HepG2 (cell line): ENCODE measurements at regions of chr15 and their contacts with region 1.

Region 1: DNA sequence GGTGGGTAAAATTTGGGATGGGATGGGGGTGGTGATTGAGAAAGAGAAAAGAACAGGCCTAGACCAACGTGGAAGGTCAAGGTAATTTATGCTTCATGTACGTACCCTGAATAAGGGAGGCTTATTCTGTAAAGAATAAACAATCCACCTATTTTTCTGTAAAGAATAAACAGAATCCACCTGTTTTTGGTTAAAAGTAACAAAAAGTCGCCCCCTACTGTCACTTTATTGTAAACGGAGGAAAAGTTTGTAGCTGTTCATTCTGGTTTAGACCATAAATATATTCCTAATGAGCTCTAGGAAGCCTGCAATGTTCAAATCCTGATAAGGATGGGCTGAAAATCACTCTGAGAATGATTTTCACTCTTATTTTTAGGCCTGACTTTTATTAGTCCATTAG is 23.5 kb upstream of the SQOR start:
- DNase-seq: peak; percentile 12
- ATAC-seq: no peak
- H3K4me3 ChIP-seq: no peak overlapping the region
- H3K27ac ChIP-seq: no peak overlapping the region
- H3K4me1 ChIP-seq: no peaks in the 10 kb centered on the region; the same call in 1 of the 2 replicates
- H3K27me3 ChIP-seq: no peaks in the 10 kb centered on the region
- CTCF ChIP-seq: peak; percentile 37
- EP300 ChIP-seq: no peak
- POLR2A ChIP-seq: no peak
- RAD21 ChIP-seq: no peak

Region 2: GRCh38 chr15:45346381-45346780 is 264.9 kb before region 1 on chr15:
- CTCF ChIA-PET with region 1: no interaction called
- POLR2A ChIA-PET with region 1: no interaction called
- in situ Hi-C with region 1: no loop called
- intact Hi-C with region 1: no loop called
- DNase-seq: peak; percentile 28
- ATAC-seq: peak; percentile 76
- H3K4me3 ChIP-seq: no peak overlapping the region
- H3K27ac ChIP-seq: peak overlapping the region; percentile 61
- H3K4me1 ChIP-seq: peaks cover 74% of the 10 kb centered on the region
- H3K27me3 ChIP-seq: no peaks in the 10 kb centered on the region
- CTCF ChIP-seq: no peak
- EP300 ChIP-seq: no peak
- POLR2A ChIP-seq: no peak
- RAD21 ChIP-seq: no peak

Region 3: DNA sequence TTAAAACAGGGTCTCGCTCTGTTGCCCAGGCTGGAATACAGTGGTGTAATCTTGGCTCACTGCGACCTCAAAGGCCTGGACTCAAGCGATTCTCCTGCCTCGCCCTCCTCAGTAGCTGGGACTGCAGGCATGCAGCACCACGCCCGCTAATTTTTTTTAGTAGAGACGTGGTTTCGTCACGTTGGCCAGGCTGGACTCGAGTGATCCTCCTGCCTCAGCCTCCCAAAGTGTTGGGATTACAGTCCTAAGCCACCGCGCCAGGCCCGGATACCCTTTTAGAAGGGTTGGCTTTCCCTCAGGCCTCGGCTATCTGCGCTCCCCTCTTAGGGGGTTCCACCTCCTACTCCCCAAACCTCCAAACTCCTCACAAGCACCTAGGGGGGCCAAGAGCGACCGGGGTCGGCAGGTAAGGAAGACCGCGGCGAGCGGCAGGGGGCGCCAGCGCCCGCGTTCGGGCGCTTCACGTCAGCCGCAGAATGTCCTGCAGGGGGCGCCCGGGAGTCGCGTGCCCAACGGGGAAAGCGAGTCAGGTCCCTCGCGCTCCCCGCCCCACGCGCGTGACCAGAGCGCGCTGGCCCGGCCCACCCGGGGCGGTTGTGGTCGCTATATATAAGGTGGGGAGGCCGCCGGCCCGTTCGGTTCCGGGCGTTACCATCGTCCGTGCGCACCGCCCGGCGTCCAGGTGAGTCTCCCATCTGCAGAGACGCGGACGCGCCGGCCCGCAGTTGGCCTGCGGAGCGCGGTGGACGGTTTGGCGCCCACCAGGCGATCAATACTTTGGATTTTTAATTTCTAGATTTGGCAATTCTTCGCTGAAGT is 181.1 kb before region 1 on chr15:
- CTCF ChIA-PET with region 1: interaction called, 15 read pairs
- POLR2A ChIA-PET with region 1: no interaction called
- in situ Hi-C with region 1: no loop called
- intact Hi-C with region 1: no loop called
- DNase-seq: peak; percentile 22
- ATAC-seq: peak; percentile 93
- H3K4me3 ChIP-seq: peak overlapping the region; percentile 43 to 67 (median 54); a peak in 4 of 6 replicates
- H3K27ac ChIP-seq: no peak overlapping the region
- H3K4me1 ChIP-seq: peaks cover 24% of the 10 kb centered on the region
- H3K27me3 ChIP-seq: no peaks in the 10 kb centered on the region
- CTCF ChIP-seq: peak; percentile 97
- EP300 ChIP-seq: no peak
- POLR2A ChIP-seq: no peak
- RAD21 ChIP-seq: peak; percentile 94

Region 4: DNA sequence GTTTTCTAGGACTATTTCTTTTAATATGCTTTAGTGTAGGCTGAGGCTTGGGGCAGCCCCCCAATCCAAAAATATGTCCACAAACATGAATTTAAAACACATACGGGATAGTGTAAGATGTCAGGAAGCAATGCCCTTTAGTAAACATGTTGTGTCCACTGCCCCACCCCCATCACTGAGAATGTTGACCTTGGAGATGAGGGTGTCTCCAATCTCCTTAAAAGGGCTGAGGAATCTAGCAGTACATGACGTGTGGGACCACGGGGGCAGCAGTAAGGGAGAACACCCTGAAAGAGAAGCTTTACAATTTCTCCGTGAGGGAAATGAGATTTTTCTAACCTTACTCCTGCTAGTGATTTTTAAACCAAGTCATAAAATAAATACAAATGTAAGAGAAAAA is 108.2 kb after region 1 on chr15:
- CTCF ChIA-PET with region 1: no interaction called
- POLR2A ChIA-PET with region 1: no interaction called
- in situ Hi-C with region 1: no loop called
- intact Hi-C with region 1: no loop called
- DNase-seq: no peak
- ATAC-seq: no peak
- H3K4me3 ChIP-seq: no peak overlapping the region
- H3K27ac ChIP-seq: no peak overlapping the region
- H3K4me1 ChIP-seq: peaks cover 7% of the 10 kb centered on the region
- H3K27me3 ChIP-seq: no peaks in the 10 kb centered on the region; a peak in 1 of 5 replicates
- CTCF ChIP-seq: no peak
- EP300 ChIP-seq: no peak
- POLR2A ChIP-seq: no peak
- RAD21 ChIP-seq: no peak

Region 5: DNA sequence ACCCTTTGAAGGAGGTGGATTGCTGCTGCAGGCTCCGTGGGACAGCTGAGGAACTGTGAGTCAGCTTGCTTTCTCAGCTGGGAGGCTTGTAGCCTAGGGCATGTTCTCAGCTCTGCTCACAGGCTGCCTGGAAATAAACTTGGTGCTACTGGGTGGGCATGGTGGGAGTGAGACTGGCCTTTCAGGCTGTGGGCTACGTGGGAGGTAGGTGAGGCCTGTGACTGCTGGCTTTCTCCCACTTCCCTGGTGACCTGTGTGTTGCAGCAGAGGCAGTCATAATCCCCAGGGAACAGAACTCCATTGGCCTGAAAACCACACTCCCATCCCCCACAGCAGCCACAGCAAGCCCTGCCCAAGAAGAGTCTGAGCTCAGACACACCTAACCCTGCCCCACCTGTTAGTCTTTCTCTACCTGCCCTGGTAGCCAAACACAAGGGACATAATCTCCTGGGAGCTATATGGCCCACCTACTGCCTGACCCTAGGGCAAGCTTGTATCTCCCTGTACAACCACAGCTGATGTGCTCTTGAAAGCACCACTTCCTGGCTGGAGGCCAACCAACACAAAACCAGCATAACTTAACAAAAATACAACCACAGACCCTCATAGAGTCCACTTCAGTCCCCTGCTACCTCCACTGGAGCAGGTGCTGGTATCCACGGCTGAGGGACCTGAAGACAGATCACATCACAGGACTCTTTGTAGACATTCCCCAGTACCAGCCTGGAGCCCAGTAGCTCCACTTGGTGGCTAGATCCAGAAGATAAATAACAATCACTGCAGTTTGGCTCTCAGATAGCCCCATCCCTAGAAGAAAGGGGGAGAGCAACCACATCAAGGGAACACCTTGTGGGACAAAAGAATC is 260.0 kb after region 1 on chr15:
- CTCF ChIA-PET with region 1: no interaction called
- POLR2A ChIA-PET with region 1: no interaction called
- in situ Hi-C with region 1: no loop called
- intact Hi-C with region 1: no loop called
- DNase-seq: no peak
- ATAC-seq: no peak
- H3K4me3 ChIP-seq: no peak overlapping the region
- H3K27ac ChIP-seq: no peak overlapping the region
- H3K4me1 ChIP-seq: no peaks in the 10 kb centered on the region
- H3K27me3 ChIP-seq: no peaks in the 10 kb centered on the region
- CTCF ChIP-seq: no peak
- EP300 ChIP-seq: no peak
- POLR2A ChIP-seq: no peak
- RAD21 ChIP-seq: no peak